ENCODE measurements at regions of chr21 and their contacts with region 1.

Region 1: DNA sequence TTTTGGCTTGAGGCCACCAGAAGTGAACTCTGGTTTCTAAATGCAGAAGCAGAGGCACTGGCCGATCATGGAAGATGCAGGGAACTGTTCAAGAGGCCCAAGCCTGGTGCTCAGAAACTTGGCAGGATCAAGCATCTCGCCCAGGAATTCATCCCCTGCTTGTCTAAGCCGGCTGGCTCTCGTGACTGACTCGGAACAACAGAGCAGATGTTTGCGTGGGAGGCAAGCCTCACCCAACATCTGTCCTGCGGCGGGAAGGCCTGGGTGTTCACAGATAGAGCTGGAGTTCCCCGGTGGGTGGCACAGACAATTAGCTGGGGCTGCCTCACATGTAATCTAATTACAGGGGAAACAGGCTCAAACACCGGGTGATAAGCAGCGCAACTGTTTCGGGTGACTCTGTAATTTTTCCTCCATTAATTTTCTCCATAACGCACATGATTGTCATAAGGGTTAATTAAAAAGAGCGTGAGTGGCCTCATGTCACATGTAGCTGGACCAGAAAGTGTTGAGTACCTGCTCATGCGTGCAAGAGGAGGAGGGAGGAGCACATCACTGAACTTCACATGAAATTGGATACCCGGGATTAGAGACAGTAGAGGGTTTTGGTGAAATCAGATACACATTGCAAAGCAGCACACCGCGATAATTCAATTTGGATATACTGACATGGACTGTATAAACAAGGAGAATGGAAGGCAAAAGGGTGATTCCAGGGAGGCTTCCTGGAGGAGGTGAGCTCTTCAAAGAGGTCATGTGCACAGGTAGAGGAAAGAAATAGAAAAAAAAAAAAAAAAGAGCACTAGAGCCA is 180.0 kb downstream of the ETS2 start:
- DNase-seq: peak; percentile 67 to 78
- ATAC-seq: peak; percentile 22 to 36 (median 24)
- H3K4me3 ChIP-seq: peak overlapping the region; percentile 53
- H3K27ac ChIP-seq: peak overlapping the region; percentile 73
- H3K4me1 ChIP-seq: peaks cover 68% of the 10 kb centered on the region
- H3K27me3 ChIP-seq: no peaks in the 10 kb centered on the region
- CTCF ChIP-seq: no peak

Region 2: GRCh38 chr21:38875694-38876492 is 109.9 kb before region 1 on chr21:
- intact Hi-C with region 1: no loop called
- DNase-seq: no peak
- ATAC-seq: no peak
- H3K4me3 ChIP-seq: no peak overlapping the region
- H3K27ac ChIP-seq: no peak overlapping the region
- H3K4me1 ChIP-seq: no peaks in the 10 kb centered on the region
- H3K27me3 ChIP-seq: no peaks in the 10 kb centered on the region
- CTCF ChIP-seq: no peak

Region 3: DNA sequence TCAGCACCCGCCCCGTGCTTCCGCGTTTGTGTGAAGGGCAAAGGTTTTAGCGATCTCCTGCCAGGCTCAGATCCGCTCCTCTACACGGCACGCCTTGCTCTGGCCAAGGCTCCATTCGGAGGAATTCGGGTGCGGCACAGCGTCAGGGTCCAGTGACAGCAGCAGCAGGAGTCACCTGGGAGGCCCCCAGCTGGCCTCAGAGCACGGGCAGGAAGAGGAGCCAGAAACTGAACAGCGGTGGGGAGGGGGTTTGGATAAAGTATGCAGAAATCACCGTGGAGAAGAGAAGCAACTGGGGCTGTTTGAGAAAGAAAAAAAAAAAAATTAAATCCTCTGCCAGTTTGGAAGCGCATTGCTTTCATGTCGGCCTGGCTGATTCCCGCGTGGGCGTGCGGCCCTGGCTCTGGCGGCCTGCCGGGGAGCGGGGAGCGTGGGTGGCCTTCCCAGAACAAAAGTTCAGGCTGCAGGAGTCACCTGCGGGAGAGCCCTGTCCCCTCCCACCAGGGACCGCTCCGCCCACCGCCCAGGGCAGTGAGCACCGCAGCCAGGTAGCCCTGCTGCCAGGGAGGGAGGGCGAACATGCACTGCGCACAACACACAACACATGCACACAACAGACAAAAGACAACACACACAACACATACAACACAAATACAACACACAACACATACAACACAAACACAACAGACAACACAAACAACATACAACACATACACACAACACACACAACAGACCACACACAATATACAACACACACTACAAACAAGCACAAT is 72.5 kb before region 1 on chr21:
- intact Hi-C with region 1: loop called in 1 of 2 experiments (anchors 5 kb)
- DNase-seq: peak; percentile 83 to 89
- ATAC-seq: peak; percentile 72 to 87 (median 81)
- H3K4me3 ChIP-seq: peak overlapping the region; percentile 48
- H3K27ac ChIP-seq: peak overlapping the region; percentile 94
- H3K4me1 ChIP-seq: peaks cover 51% of the 10 kb centered on the region
- H3K27me3 ChIP-seq: no peaks in the 10 kb centered on the region
- CTCF ChIP-seq: no peak

Region 4: DNA sequence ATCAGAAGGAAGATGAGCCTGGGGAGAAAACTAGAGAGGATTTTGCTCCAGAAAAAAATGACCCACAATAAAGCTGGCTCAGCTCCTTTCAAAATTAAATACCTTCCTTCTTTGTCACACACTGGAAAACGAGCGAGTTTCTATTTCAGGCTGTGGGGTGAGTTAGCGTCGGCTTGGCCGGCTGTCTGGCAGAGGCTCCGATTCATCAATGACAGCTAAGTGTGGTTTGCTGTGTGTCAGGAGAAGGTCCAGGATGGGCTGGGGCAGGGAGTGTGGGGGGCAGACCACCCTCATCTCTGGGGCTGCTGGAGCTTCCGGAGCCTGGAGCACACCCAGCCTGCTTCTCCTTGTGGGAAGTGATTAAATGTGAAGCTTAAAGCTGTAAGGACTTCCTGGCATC is 59.9 kb before region 1 on chr21:
- intact Hi-C with region 1: loop called (anchors 5 kb)
- DNase-seq: peak; percentile 73 to 83
- ATAC-seq: peak; percentile 94 to 98 (median 97)
- H3K4me3 ChIP-seq: peak overlapping the region; percentile 51
- H3K27ac ChIP-seq: peak overlapping the region; percentile 77
- H3K4me1 ChIP-seq: peaks cover 19% of the 10 kb centered on the region
- H3K27me3 ChIP-seq: no peaks in the 10 kb centered on the region
- CTCF ChIP-seq: no peak

Region 5: GRCh38 chr21:39088831-39089380 is 103.1 kb after region 1 on chr21:
- intact Hi-C with region 1: loop called in 1 of 2 experiments (anchors 5 kb)
- DNase-seq: peak in 1 of 2 donors; percentile 39
- ATAC-seq: peak; percentile 26 to 53 (median 42)
- H3K4me3 ChIP-seq: peak overlapping the region; percentile 66
- H3K27ac ChIP-seq: peak overlapping the region; percentile 97
- H3K4me1 ChIP-seq: peaks cover 27% of the 10 kb centered on the region
- H3K27me3 ChIP-seq: no peaks in the 10 kb centered on the region
- CTCF ChIP-seq: no peak

Region 6: GRCh38 chr21:39125752-39126485 is 140.1 kb after region 1 on chr21:
- intact Hi-C with region 1: loop called (anchors 10 kb)
- DNase-seq: peak in 1 of 2 donors; percentile 63
- ATAC-seq: peak; percentile 83 to 95 (median 94)
- H3K4me3 ChIP-seq: no peak overlapping the region
- H3K27ac ChIP-seq: peak overlapping the region; percentile 38
- H3K4me1 ChIP-seq: peaks cover 13% of the 10 kb centered on the region
- H3K27me3 ChIP-seq: no peaks in the 10 kb centered on the region
- CTCF ChIP-seq: peak; percentile 60

Region 7: GRCh38 chr21:39251326-39251725 is 265.6 kb after region 1 on chr21:
- intact Hi-C with region 1: no loop called
- DNase-seq: no peak
- ATAC-seq: no peak
- H3K4me3 ChIP-seq: no peak overlapping the region
- H3K27ac ChIP-seq: no peak overlapping the region
- H3K4me1 ChIP-seq: peaks cover 4% of the 10 kb centered on the region
- H3K27me3 ChIP-seq: no peaks in the 10 kb centered on the region
- CTCF ChIP-seq: no peak